ENCODE measurements at regions of chr9 and their contacts with region 1.

Region 1: DNA sequence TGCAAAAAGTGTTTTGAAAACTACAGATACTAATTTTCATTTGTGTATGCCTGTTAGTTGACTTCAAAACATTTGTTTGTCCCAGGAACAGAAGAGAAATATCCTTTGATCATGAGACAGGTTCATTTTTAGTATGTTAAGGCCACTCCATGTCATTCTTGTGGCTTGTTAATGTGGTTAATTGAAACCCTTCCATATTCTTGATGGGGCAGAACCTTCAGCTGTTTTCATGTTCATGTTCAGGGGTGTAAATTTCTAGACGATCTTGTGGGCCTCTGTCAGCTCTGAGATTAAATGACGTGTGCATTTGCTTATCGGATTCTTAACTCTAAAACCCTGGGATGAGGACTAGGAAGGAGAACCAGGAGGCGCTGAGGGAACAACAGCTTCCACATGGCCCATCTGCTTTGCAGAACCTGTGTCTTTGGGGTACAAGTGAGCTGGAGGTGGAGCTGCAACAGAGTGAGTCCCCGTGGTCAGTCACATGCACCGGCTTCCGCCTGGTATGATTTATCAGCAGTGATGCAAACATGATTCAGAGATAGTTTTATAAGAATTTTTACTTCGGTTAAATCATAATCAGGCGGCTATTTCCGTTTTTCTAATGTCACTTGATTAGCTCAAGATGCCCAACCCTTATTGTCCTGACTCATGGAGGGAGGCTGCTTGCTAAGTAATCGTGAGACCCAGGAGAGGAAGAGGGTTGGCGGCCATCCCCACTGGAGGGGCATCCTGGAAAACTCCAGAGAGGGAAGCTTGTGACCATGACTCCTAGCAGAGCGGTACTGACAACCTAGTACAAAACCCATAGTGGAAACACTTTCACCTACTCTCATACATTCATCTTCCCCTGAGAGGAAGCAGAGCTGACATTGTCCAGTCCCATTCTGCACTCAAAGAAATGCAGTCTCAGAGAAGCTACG is 138.4 kb downstream of the C9orf152 start:
- DNase-seq: no peak
- H3K4me3 ChIP-seq: no peak overlapping the region
- CTCF ChIP-seq: no peak

Region 2: GRCh38 chr9:109903515-109904138 is 166.0 kb before region 1 on chr9:
- in situ Hi-C with region 1: loop called (anchors 5 kb)
- DNase-seq: peak; percentile 67
- H3K4me3 ChIP-seq: no peak overlapping the region
- CTCF ChIP-seq: peak; percentile 76

Region 3: GRCh38 chr9:110152704-110153374 is 83.3 kb after region 1 on chr9:
- in situ Hi-C with region 1: loop called (anchors 5 kb)
- DNase-seq: no peak
- H3K4me3 ChIP-seq: no peak overlapping the region
- CTCF ChIP-seq: peak; percentile 72